ENCODE measurements at regions of chr5 and their contacts with region 1.

Region 1: GRCh38 chr5:139293504-139294373 is at the start of gene MATR3:
- DNase-seq: peak; percentile 97
- total RNA-seq, gene MATR3: 170 TPM

Region 2: DNA sequence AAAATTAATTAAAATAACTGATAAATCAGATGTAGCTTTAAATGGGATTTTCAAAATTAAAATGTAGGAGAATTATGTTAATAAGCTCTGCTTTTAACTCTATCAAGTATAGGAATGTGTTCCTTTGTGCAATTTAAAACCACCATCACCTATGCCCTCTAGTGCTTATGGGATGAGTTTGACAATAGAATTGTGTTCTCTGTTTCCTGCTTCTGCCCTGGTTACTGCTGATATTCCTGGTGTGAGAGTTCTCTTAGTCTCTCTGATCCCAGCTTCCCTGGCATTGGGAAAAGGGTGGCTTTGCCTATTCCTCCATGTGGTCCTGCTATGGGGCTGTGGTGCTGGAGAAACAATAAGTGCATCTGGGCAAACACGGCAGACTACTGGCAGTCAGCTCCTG is 426.7 kb before region 1 on chr5:
- intact Hi-C with region 1: no loop called
- DNase-seq: no peak

Region 3: DNA sequence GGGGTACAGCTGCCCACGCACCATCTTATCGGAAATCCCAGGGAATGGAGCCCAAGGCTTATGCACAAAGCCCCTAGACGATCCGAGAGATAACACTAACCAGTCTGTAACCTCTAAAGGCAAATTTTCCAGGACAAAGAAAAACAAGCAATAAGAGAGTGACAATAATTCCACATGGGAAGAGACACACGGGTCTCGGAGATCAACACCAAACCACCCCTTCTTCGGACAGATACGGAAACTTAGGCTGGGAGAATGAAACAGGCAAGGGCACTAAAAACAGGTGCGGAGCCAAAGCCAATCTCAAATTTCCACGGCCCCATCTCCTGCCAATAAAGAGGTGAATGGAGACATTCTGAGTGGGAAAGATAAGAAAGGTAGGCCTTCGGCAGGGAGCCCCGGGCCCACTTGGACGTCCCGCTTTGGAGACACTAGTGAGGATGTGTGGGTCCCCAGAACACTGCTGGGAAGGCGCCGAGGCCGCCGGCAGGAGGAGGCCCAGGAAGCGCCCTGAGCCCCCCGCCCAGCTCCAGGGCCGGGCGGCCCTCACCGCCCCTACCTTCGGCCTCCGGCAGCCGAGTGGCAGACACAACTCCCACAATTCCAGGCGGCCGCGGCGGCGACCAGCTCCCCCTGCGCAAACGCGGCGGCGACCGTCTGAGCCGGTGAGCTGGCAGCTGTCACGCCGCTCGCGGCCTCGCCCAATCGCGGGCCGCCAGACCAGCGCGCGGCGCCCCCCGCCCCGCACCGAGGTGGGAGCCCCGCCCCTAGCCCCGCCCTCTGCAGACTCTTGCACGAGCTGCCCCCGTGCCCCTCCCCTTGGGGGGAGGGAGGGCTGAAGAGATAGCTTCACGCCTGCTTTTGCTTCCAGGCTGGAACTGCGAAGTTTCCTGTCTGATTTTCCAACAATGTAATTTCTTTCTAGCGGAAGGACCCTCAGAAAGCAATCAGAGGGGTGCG is 95.7 kb before region 1 on chr5 and contains the start of gene SIL1:
- intact Hi-C with region 1: no loop called
- DNase-seq: peak; percentile 97
- total RNA-seq, gene SIL1: 43.1 TPM

Region 4: GRCh38 chr5:139275956-139276355 is 17.8 kb before region 1 on chr5:
- intact Hi-C with region 1: loop called (anchors 2 kb)
- DNase-seq: no peak

Region 5: GRCh38 chr5:139341650-139342422 is 48.1 kb after region 1 on chr5 and contains the start of gene PAIP2:
- intact Hi-C with region 1: loop called (anchors 2 kb)
- DNase-seq: peak; percentile 99
- total RNA-seq, gene PAIP2: 133 TPM

Region 6: DNA sequence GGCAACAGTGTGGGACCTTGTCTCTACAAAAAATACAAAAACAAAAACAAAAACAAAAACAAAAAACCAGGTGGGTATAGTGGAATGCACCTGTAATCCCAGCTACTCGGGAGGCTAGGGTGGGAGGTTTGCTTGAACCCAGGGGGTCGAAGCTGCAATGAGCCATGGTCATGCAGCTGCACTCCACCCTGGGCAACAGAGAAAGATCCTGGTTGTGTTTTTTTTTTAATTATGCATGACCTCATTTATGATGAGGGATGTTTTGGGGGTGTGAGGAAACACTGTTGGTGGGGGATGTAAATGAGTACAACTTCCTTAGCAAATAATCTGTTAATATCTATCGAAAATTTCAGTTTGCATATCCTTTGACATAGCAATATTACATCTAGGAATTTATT is 238.0 kb after region 1 on chr5:
- intact Hi-C with region 1: no loop called
- DNase-seq: no peak

Measured in cardiac septum (tissue), 1 donor.